Activated CD4-positive, alpha-beta memory T cell treated with anti-CD3 and anti-CD28 coated beads, Interleukin-2, amount 10 ng/mL, durations not matched to agents 7 days and 5 days (primary cell): ENCODE measurements at regions of chr15 and their contacts with region 1.

Region 1: DNA sequence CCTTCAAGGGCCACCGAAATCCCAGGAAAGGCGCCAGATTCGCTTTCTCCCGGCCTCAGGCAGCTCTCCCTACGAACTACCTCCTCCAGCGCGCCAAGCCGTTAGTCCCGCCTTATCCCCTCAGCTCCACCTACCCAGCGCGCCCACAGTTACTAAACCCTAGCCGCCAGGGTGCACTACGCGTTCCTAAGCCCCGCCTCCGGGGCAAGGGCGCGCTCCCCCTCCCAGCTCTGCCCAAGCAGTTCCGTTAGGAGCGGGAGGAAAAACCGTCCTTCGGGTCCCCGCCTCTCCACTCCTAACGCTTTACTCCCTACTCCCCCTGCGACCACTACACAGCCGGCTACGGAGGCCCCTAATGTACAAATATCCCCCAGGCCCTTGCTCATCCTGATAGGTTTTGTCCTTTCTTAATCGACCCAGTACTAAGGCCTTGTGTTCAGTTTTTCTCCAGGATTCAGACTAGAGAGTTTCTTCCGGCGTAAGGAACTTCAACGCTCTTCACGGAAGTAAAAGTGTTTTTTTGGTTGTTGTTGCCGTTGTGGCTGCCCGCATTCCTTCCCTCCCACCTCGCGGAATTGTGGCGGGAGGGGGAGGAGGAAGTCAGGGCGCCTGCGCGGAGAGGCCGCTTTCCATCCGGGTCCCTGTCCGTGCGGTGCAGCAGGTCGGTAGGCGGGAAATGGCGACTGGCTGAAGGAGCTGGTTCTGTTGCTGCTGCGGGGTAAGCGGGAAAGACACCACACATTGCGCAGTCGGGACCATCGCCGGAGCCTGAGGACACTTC is at the start of gene CTDSPL2:
- DNase-seq: peak; percentile 95
- H3K4me3 Mint-ChIP-seq: peak within 1 kb of the TSS; percentile 91
- H3K27ac Mint-ChIP-seq: peak within 1 kb of the TSS; percentile 94
- H3K4me1 Mint-ChIP-seq: peaks cover 44% of the 10 kb centered on the region
- H3K27me3 Mint-ChIP-seq: no peaks in the 10 kb centered on the region
- total RNA-seq, gene CTDSPL2: 64.9 to 66.7 TPM

Region 2: DNA sequence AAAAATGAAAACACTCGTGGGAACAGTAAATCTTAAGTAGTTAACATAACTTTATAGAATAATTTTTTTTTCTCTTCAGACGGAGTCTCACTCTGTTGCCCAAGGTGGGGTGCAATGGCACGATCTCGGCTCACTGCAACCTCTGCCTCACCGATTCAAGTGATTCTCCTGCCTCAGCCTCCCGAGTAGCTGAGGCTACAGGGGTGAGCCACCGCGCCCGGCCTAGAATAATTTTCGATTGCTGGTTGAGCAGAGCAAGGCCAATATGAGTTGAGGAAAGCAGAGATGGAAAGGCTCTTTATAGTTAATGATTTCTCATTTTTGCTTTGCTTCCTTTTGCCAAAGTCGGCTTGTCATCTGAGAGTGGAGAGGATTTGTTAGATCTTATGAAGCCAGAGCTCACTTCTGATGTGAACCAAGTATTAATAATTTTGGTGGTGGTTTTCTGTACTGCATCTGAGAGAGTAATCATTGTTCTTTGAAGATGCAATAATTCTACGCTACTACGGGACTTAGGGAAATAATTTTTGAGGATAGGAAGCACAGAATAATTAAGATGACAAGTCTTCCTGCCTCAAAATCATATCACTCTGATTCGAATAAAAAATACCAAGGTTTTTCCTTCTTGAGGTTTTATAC is 140.2 kb before region 1 on chr15:
- CTCF ChIA-PET with region 1: interaction called, 9 read pairs
- POLR2A ChIA-PET with region 1: interaction called, 93 read pairs
- DNase-seq: no peak
- H3K4me3 Mint-ChIP-seq: peak overlapping the region; percentile 90
- H3K27ac Mint-ChIP-seq: peak overlapping the region; percentile 97
- H3K4me1 Mint-ChIP-seq: peaks cover 39% of the 10 kb centered on the region
- H3K27me3 Mint-ChIP-seq: peaks cover 4% of the 10 kb centered on the region

Region 3: GRCh38 chr15:44414001-44414400 is 13.2 kb before region 1 on chr15:
- CTCF ChIA-PET with region 1: interaction called, 3 read pairs
- POLR2A ChIA-PET with region 1: interaction called, 28 read pairs
- DNase-seq: no peak
- H3K4me3 Mint-ChIP-seq: no peak overlapping the region
- H3K27ac Mint-ChIP-seq: no peak overlapping the region
- H3K4me1 Mint-ChIP-seq: peaks cover 2% of the 10 kb centered on the region
- H3K27me3 Mint-ChIP-seq: no peaks in the 10 kb centered on the region

Region 4: GRCh38 chr15:44501768-44502366 is 74.7 kb after region 1 on chr15:
- CTCF ChIA-PET with region 1: interaction called, 5 read pairs
- POLR2A ChIA-PET with region 1: interaction called, 13 read pairs
- DNase-seq: no peak
- H3K4me3 Mint-ChIP-seq: no peak overlapping the region
- H3K27ac Mint-ChIP-seq: no peak overlapping the region
- H3K4me1 Mint-ChIP-seq: peaks cover 20% of the 10 kb centered on the region
- H3K27me3 Mint-ChIP-seq: no peaks in the 10 kb centered on the region

Region 5: DNA sequence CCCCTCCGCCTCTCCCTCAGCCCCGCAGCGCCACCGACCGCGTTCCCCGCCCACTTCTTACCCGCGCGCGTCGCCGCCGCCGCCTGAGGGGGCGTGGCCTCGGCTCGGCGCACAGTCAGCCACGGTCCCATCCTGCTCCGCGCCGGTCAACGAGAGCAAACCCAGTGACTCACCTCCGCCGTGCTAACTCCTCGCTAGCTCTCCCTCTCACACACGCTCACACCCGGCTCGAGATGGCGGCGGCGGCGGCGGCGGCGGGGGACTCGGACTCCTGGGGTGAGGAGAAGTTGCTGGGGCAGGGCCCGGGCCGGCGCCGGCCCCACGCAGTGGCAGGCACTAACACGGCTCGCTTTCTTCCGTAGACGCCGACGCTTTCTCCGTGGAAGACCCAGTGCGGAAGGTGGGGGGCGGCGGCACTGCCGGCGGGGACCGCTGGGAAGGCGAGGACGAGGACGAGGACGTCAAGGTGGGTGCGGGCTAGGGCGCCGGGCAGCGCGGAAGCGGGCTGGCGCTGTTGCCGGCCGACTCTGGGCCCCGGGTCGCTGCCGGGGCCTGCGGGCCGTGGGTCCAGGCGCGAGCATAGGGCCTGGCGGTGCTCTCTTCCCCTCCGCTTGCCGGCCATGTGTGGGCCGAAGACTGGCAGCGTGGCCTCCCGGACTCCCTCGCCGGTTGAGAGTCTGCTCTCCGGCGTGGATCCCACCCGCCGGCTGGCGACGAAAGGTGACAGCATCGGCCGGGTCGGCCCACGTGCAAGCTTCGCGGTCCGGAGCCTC is 110.0 kb after region 1 on chr15 and contains the start of gene EIF3J:
- CTCF ChIA-PET with region 1: interaction called, 5 read pairs
- POLR2A ChIA-PET with region 1: interaction called, 36 read pairs
- DNase-seq: peak; percentile 96
- H3K4me3 Mint-ChIP-seq: peak within 1 kb of the TSS; percentile 84
- H3K27ac Mint-ChIP-seq: peak within 1 kb of the TSS; percentile 95
- H3K4me1 Mint-ChIP-seq: peaks cover 56% of the 10 kb centered on the region
- H3K27me3 Mint-ChIP-seq: no peaks in the 10 kb centered on the region
- total RNA-seq, gene EIF3J: 70.6 to 87.8 TPM

Region 6: GRCh38 chr15:44545913-44546802 is 119.0 kb after region 1 on chr15:
- CTCF ChIA-PET with region 1: interaction called, 9 read pairs
- POLR2A ChIA-PET with region 1: interaction called, 15 read pairs
- DNase-seq: peak; percentile 64
- H3K4me3 Mint-ChIP-seq: peak overlapping the region; percentile 72
- H3K27ac Mint-ChIP-seq: peak overlapping the region; percentile 97
- H3K4me1 Mint-ChIP-seq: peaks cover 55% of the 10 kb centered on the region
- H3K27me3 Mint-ChIP-seq: no peaks in the 10 kb centered on the region